RWPE1 (cell line): ENCODE measurements at regions of chr14 and their contacts with region 1.

Region 1: DNA sequence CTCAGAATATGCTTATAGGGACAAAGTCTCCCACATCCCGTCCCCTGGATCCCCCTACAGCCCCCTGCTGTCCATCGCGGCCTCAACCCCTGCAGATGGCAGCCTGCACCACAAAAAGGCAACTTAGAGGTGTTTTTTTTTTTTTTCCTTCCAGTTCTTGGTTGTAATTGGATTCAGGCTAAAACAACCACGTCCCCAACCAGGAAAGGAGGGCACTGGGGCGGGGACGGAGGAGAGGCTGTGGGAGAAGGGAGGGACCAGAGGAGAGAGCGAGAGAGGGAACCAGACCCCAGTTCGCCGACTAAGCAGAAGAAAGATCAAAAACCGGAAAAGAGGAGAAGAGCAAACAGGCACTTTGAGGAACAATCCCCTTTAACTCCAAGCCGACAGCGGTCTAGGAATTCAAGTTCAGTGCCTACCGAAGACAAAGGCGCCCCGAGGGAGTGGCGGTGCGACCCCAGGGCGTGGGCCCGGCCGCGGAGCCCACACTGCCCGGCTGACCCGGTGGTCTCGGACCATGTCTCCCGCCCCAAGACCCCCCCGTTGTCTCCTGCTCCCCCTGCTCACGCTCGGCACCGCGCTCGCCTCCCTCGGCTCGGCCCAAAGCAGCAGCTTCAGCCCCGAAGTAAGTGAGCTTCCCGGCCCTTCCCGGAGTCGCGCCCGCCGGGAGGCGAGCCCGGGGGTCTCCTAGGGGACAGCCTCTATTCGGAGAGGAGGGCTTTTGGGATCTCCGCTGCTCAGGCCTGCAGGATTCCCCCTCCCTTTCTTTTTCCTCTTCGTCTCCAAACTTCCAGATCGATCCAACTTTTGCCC is at the start of gene MMP14:
- DNase-seq: peak; percentile 59
- H3K27ac ChIP-seq: peak within 1 kb of the TSS; percentile 99
- CTCF ChIP-seq: no peak; the same call in 1 of the 2 replicates

Region 2: DNA sequence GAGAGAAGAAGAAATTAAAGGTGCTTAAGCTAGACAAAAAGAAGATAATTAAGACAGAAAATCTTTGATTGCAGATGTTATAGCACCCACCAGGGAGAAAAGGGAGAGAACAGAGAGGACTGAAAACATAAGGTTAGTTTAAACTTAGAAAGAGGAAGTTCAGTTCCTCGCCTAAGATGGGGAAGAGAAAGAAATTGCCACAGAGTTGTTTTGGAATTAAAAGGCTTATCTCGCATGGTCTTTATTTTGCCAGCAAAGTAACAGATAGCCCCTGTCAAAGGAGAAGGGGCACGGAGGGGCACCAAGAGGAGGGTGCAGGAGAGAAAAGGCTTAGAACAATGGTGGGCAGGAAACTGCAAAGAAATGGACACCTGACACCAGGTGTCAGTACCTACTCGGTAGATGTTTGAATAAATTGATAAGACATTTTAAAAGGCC is 87.9 kb before region 1 on chr14:
- CTCF ChIA-PET with region 1: no interaction called
- POLR2A ChIA-PET with region 1: no interaction called
- DNase-seq: no peak
- H3K27ac ChIP-seq: no peak overlapping the region
- CTCF ChIP-seq: no peak

Region 3: DNA sequence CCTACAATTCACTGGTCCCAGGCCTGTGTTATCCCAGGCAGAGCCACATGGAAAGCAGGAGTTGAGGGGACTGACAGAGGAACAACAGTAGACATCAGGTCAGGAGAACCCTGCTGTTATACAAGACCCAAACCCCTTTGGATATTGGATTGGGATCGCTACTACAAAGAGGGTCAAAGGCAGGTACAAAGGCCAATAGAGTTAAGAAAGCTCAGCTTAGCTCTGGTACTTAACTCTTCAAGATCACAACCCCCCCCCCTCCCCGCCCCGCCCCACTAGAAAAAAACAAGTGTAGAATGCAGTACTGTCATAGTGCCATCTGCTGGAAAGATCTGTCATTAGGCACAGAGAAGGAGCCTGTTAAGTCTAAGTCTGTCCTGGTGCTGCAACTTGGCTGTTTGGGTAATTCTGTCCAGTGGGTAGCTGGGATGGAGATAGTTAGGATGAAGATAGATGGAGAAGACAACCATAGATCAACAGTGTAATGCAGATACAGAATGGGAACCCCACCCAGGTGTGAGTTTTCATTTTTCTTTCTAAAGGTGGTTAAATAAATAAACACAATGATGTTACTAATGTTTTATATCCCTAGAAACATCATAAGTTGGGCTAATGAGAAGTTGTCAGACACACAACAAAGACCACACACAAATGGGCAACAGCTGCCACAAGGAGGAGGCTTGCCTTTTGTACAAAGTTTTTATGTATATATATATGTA is 63.7 kb after region 1 on chr14:
- CTCF ChIA-PET with region 1: interaction called, 12 read pairs
- POLR2A ChIA-PET with region 1: no interaction called
- DNase-seq: peak; percentile 82
- H3K27ac ChIP-seq: no peak overlapping the region
- CTCF ChIP-seq: peak; percentile 79